Activated T-helper 1 cell treated with anti-CD3 and anti-CD28 coated beads, Interleukin-12 subunit alpha, Interleukin-12 subunit beta, Interleukin-2, Interleukin-4 antibody, amounts not matched to agents 30 ng/mL and 10 ng/mL and 1 ng/mL, durations not matched to agents 14 hours and 24 hours and 36 hours (primary cell): ENCODE measurements at regions of chr10 and their contacts with region 1.

Region 1: GRCh38 chr10:7525314-7526016 is 114.6 kb upstream of the SFMBT2 start:
- DNase-seq: peak; percentile 56
- H3K4me3 Mint-ChIP-seq: no peak overlapping the region
- H3K27ac Mint-ChIP-seq: peak overlapping the region; percentile 6
- H3K4me1 Mint-ChIP-seq: peaks cover 15% of the 10 kb centered on the region
- H3K27me3 Mint-ChIP-seq: peaks cover 13% of the 10 kb centered on the region

Region 2: GRCh38 chr10:7541137-7542095 is 16.0 kb after region 1 on chr10:
- intact Hi-C with region 1: no loop called
- DNase-seq: no peak
- H3K4me3 Mint-ChIP-seq: no peak overlapping the region
- H3K27ac Mint-ChIP-seq: no peak overlapping the region
- H3K4me1 Mint-ChIP-seq: peaks cover 9% of the 10 kb centered on the region
- H3K27me3 Mint-ChIP-seq: no peaks in the 10 kb centered on the region

Region 3: DNA sequence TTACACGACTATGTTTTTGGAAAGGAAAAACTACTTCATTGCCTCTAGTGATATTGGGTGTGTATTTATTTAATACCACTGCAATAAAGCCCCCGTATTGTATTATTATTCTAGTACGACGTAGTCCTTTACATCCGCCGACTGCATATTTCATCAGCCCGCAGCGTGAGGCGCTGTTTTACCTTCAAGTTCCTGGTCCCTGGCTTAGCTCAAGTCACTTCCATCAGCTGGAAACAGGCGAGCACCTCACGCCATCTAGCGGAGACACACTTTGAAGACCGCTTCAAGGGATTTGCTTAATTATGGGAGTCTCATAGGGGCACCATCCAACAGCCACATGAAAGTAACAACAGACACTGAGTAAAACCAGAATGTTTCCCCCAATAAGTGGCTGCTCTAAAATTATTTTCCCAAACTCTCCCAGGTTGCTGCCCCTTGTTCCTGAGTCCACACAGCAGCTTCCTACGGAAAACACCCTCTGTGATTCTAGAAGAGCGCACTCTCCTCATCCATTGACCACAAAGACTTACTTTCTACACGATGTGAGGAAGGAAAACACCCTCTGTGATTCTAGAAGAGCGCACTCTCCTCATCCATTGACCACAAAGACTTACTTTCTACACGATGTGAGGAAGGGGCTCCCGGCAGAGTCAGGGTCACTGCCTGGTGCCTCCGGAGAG is 161.9 kb after region 1 on chr10:
- intact Hi-C with region 1: loop called (anchors 1 kb)
- DNase-seq: peak; percentile 66
- H3K4me3 Mint-ChIP-seq: no peak overlapping the region
- H3K27ac Mint-ChIP-seq: no peak overlapping the region
- H3K4me1 Mint-ChIP-seq: peaks cover 19% of the 10 kb centered on the region
- H3K27me3 Mint-ChIP-seq: peaks cover 28% of the 10 kb centered on the region

Region 4: DNA sequence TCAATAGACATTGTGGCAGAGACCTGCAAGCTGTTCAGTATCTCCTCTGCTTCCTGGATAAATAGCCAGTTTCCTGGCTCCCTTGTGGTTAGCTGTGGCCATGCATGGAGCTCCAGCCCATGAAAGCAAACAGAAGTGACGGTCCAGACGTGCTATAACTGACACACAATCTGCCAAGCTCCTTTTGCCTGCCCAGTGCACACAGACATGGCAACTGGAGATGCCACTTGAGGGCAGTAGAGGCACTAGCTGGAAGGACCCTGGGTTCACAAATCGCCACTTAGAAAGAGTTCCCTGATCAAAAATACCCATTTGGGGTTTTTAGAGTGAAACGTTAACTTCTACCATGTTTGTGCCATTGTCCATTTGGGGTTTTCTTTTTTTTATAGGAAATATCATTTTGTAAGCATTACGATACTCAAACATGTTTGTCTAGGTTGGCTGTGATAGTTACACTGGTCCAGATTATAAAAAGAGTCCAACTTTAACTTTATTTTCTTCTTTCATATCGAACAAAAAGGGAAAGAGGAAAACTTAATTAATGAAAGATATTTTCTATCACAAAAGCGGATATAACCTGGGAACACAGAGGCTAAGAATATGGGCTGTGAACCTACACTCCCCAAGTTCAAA is 231.0 kb after region 1 on chr10:
- intact Hi-C with region 1: loop called (anchors 2 kb)
- DNase-seq: peak; percentile 3
- H3K4me3 Mint-ChIP-seq: no peak overlapping the region
- H3K27ac Mint-ChIP-seq: no peak overlapping the region
- H3K4me1 Mint-ChIP-seq: no peaks in the 10 kb centered on the region
- H3K27me3 Mint-ChIP-seq: no peaks in the 10 kb centered on the region